ENCODE measurements at regions of chr6 and their contacts with region 1.

Region 1: DNA sequence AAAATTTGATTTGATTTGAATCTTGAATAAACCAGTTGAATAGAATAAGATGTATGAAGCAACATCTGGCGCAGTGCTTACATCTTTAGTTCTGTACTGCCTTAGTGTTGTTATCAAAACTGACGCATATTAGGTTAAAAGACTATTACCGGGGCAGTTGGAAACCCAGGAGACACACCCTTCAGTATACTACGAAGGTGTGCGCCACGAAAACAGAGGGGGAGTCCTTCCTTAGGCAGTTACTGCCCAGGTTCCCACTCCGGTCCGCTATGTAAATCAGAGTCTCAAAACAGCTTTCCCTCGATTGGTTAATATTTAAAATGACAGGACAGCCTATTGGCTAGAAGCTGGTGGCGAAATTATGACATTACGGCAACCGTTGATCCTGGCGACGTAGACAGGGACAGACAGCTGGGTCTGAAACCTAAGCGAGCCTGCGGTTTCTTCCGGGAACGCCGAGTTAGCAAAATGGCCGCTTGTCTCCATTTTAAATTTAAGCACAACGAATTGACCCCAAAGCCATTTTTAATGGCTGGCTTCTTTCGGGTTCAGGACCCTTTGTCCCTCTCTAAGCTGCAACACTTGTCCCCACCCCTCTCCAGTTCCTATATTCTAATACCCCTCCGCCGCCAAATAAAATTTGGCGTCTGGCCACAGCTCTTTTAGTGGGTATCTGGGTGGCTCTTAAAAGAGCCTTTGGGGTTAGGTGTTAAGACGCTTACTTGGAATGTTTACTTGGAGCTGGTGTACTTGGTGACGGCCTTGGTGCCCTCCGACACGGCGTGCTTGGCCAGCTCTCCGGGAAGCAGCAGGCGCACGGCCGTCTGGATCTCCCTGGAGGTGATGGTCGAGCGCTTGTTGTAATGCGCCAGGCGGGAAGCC is 35.8 kb downstream of the HFE start:
- DNase-seq: peak; percentile 76 to 99 (median 94)
- ATAC-seq: peak; percentile 59 to 63
- H3K4me3 Mint-ChIP-seq: peak overlapping the region; percentile 93 to 100 (median 98)
- H3K27ac Mint-ChIP-seq: peak overlapping the region; percentile 96 to 100 (median 98)
- H3K4me1 Mint-ChIP-seq: peaks cover 24 to 43% (median 33%) of the 10 kb centered on the region in 4 donors
- H3K27me3 Mint-ChIP-seq: peaks cover 0 to 4% (median 0%) of the 10 kb centered on the region in 5 donors

Region 2: GRCh38 chr6:25981568-25982263 is 141.3 kb before region 1 on chr6:
- POLR2A ChIA-PET with region 1: no interaction called
- DNase-seq: no peak
- ATAC-seq: no peak
- H3K4me3 Mint-ChIP-seq: no peak overlapping the region
- H3K27ac Mint-ChIP-seq: peak overlapping the region in 7 of 10 donors; percentile 4 to 72 (median 27)
- H3K4me1 Mint-ChIP-seq: peaks cover 2 to 7% (median 6%) of the 10 kb centered on the region in 4 donors
- H3K27me3 Mint-ChIP-seq: no peaks in the 10 kb centered on the region

Region 3: DNA sequence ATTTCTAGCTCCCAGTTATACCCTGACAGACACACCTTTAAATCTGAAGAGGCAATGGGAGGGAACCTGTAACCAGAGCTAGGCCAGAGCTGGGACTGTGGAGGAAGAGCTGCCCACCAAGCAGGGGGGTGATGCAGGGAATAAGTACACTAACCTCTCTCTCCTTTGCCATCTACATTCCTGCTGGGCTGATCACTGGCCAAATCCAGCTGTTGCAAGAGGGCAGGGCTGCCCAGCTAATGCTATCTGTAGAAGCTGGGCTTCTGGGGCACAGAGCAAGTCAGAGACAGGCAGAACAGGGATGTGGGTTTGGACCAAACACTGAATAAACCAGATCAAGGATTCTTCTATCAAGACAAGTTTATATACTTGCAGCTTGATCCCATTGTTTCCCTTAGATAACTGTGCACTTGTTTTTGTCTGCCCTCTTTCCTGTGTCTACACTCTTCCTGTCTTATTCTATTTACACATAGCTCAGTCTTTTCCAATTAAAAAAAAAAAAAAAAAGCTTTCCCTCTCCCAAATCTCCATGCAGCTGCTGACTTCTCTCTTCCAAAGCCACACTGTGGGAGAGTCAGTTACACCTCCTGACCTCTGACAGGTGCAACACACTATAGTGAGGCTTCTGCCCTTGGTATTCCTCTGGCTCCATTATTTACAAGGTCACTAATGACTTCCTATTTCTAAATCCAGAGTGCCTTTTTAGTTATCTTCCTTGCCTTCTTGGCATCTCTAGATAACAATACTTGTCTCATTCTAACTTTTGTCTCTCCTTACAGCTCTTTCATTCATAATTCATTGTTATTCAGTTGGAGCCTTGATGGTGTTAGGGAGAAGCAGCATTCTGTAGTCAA is 116.7 kb before region 1 on chr6:
- POLR2A ChIA-PET with region 1: no interaction called
- DNase-seq: no peak
- ATAC-seq: no peak
- H3K4me3 Mint-ChIP-seq: no peak overlapping the region
- H3K27ac Mint-ChIP-seq: peak overlapping the region in 1 of 10 donors; percentile 2
- H3K4me1 Mint-ChIP-seq: peaks cover 0 to 8% (median 2%) of the 10 kb centered on the region in 4 donors
- H3K27me3 Mint-ChIP-seq: no peaks in the 10 kb centered on the region

Region 4: DNA sequence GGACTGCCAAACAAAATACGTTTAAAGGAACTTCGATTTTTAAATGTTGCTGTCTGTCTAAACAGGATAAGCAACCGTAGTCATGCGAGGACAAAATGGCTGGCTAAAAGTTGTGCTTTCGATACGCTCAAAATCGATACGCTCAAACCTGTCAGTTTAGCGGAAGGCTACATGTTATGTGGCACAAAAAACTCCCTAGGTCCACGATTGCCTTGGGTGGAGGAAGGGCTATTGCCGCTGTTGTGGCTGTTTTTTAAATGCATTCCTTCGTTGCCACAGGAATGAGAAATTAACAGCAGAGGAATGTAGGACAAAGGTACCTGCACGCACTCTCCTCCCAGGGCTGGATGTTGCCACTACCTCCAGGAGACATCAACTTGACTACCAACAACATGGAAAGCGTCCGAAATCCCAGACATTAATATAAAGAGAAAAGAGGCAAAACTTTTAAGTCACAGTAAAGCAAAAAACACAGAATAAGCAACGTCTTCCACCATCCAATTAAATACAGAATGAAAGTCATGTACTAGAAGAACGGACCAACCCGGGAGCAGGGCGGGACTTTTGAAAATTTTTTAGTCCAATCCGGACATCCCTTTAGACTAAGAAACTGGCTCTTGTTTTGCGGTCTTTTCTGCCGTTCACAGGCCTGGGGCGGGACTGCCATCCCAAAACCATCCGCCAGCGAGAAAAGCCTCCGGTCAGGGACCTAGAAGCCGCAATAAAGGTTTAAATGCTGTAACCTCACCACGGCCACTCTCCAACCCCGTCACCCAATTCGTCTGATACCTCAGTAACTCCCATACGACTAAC is 68.0 kb before region 1 on chr6:
- POLR2A ChIA-PET with region 1: interaction called, 96 read pairs
- DNase-seq: peak; percentile 63 to 95 (median 87)
- ATAC-seq: peak; percentile 65 to 70
- H3K4me3 Mint-ChIP-seq: peak overlapping the region; percentile 93 to 99 (median 96)
- H3K27ac Mint-ChIP-seq: peak overlapping the region; percentile 93 to 99 (median 99)
- H3K4me1 Mint-ChIP-seq: peaks cover 9 to 34% (median 21%) of the 10 kb centered on the region in 4 donors
- H3K27me3 Mint-ChIP-seq: no peaks in the 10 kb centered on the region

Region 5: GRCh38 chr6:26163427-26164119 is 40.5 kb after region 1 on chr6:
- POLR2A ChIA-PET with region 1: interaction called, 1,613 read pairs
- DNase-seq: no peak
- ATAC-seq: peak in 1 of 2 donors; percentile 6
- H3K4me3 Mint-ChIP-seq: peak overlapping the region in 8 of 10 donors; percentile 14 to 65 (median 56)
- H3K27ac Mint-ChIP-seq: peak overlapping the region in 9 of 10 donors; percentile 56 to 92 (median 82)
- H3K4me1 Mint-ChIP-seq: peaks cover 25 to 67% (median 46%) of the 10 kb centered on the region in 4 donors
- H3K27me3 Mint-ChIP-seq: no peaks in the 10 kb centered on the region

Region 6: GRCh38 chr6:26223650-26224546 is 100.9 kb after region 1 on chr6:
- POLR2A ChIA-PET with region 1: interaction called, 26 read pairs
- DNase-seq: peak; percentile 54 to 85 (median 71)
- ATAC-seq: peak; percentile 89 to 90
- H3K4me3 Mint-ChIP-seq: no peak overlapping the region
- H3K27ac Mint-ChIP-seq: no peak overlapping the region
- H3K4me1 Mint-ChIP-seq: peaks cover 4 to 25% (median 14%) of the 10 kb centered on the region in 4 donors
- H3K27me3 Mint-ChIP-seq: no peaks in the 10 kb centered on the region

Region 7: DNA sequence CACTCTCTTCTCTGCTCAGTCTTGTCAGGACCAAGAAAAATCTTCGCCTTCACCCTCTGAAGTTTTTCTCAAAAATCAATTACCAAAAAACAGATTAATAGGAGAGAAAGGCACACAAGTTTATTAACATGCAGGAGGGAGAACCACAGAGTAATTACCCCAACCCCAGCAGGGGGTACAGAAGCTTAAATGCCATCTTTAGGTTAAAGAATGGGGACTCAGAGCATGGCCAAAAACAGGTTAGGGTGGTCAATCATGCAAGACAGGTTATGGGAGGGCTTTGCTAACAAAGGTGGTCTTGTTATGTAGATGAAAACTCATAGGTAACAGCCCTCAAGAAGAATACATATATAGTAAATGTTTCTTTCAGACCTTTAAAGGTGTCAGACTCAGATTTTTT is 141.5 kb after region 1 on chr6:
- POLR2A ChIA-PET with region 1: no interaction called
- DNase-seq: no peak
- ATAC-seq: no peak
- H3K4me3 Mint-ChIP-seq: no peak overlapping the region
- H3K27ac Mint-ChIP-seq: no peak overlapping the region
- H3K4me1 Mint-ChIP-seq: peaks cover 0 to 6% (median under 1%) of the 10 kb centered on the region in 4 donors
- H3K27me3 Mint-ChIP-seq: no peaks in the 10 kb centered on the region

Region 8: GRCh38 chr6:26285143-26286134 is 162.4 kb after region 1 on chr6:
- POLR2A ChIA-PET with region 1: interaction called, 32 read pairs
- DNase-seq: peak; percentile 80 to 99 (median 93)
- ATAC-seq: peak; percentile 77 to 87
- H3K4me3 Mint-ChIP-seq: peak overlapping the region; percentile 84 to 96 (median 91)
- H3K27ac Mint-ChIP-seq: peak overlapping the region; percentile 95 to 100 (median 98)
- H3K4me1 Mint-ChIP-seq: peaks cover 19 to 36% (median 29%) of the 10 kb centered on the region in 4 donors
- H3K27me3 Mint-ChIP-seq: peaks cover 0 to 7% (median 0%) of the 10 kb centered on the region in 5 donors

Region 9: GRCh38 chr6:27864906-27865849 is 1742.1 kb after region 1 on chr6:
- POLR2A ChIA-PET with region 1: interaction called, 29 read pairs
- DNase-seq: peak; percentile 43 to 91 (median 80)
- ATAC-seq: peak; percentile 81
- H3K4me3 Mint-ChIP-seq: peak overlapping the region; percentile 87 to 99 (median 98)
- H3K27ac Mint-ChIP-seq: peak overlapping the region; percentile 87 to 99 (median 96)
- H3K4me1 Mint-ChIP-seq: peaks cover 15 to 45% (median 39%) of the 10 kb centered on the region in 4 donors
- H3K27me3 Mint-ChIP-seq: no peaks in the 10 kb centered on the region